ENCODE measurements at regions of chr3 and their contacts with region 1.

Region 1: DNA sequence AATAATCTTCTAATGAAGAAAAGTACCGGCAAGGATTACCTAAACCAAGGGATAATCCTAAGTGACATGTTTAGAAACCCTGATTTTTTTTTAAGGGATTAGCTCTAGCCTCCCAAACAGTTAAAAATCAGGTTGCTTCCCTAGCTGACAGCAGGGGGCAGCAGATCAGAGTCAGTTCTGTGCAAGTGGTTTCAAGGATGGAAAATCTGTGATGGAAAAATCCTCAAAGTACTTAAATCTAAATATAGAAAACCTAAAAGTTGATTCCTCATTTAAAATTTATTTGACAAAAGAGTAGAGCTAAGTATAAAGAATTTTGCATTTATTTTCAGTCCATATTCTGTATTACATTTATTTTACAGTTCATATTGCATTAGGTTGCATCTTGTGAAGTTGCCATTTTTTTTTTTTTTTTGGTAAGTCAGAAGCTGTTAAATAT is 107.6 kb downstream of the PEX5L start:
- DNase-seq: peak; percentile 66
- ATAC-seq: no peak
- H3K4me3 Mint-ChIP-seq: no peak overlapping the region
- H3K27ac Mint-ChIP-seq: no peak overlapping the region
- H3K4me1 Mint-ChIP-seq: no peaks in the 10 kb centered on the region
- H3K27me3 Mint-ChIP-seq: no peaks in the 10 kb centered on the region
- CTCF ChIP-seq: peak; percentile 74

Region 2: GRCh38 chr3:179695672-179696313 is 233.3 kb before region 1 on chr3:
- CTCF ChIA-PET with region 1: no interaction called
- POLR2A ChIA-PET with region 1: no interaction called
- intact Hi-C with region 1: no loop called
- DNase-seq: no peak
- ATAC-seq: no peak
- H3K4me3 Mint-ChIP-seq: no peak overlapping the region
- H3K27ac Mint-ChIP-seq: no peak overlapping the region
- H3K4me1 Mint-ChIP-seq: peaks cover 2% of the 10 kb centered on the region
- H3K27me3 Mint-ChIP-seq: no peaks in the 10 kb centered on the region
- CTCF ChIP-seq: no peak

Region 3: DNA sequence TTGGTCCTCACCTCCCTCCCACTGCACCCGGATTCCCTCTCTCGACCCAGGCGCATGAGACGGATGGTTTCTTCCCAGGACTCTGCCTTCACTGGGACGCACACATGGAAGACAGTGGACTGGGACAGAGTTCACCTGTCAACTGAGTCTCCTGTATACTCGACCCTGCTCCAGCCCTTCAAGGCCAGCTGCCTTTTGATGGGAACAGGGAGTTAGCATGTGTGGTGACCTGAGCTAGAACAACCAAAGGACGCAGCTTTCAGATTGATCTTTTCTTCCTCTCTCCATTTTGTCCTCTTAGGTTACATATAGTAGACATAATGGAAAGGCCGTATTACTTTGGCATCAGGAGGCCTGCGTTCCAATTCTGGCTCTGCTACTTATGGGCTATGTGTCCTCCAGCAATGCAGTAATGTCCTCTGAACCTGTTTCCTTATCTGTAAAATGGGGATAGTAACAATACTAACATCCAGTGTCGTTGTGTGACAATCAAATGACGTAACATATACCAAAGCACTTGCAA is 13.5 kb after region 1 on chr3:
- CTCF ChIA-PET with region 1: interaction called, 12 read pairs
- POLR2A ChIA-PET with region 1: no interaction called
- intact Hi-C with region 1: no loop called
- DNase-seq: no peak
- ATAC-seq: no peak
- H3K4me3 Mint-ChIP-seq: no peak overlapping the region
- H3K27ac Mint-ChIP-seq: no peak overlapping the region
- H3K4me1 Mint-ChIP-seq: peaks cover 4% of the 10 kb centered on the region
- H3K27me3 Mint-ChIP-seq: peaks cover 18% of the 10 kb centered on the region
- CTCF ChIP-seq: no peak

Region 4: DNA sequence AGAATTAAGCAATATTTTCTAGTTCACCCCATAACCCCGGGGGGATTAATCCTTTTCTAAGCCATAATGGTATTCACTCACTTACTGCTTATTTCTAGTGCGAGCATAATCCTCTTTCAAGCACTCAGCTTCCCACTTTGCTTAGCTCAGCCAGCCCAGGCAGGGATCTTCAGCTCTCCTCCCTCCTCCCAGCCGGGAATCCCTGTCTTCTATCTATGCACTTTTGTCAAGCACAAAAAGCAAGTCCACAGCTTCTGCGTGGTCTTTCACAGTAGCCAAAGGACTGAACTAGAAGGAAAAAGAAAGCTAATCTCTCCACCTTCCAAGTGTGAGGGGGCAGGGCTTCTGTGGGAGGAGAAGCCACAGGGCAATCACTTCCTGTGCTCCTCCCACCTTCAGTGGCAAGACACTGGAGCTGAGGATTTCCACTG is 44.8 kb after region 1 on chr3:
- CTCF ChIA-PET with region 1: interaction called, 10 read pairs
- POLR2A ChIA-PET with region 1: no interaction called
- intact Hi-C with region 1: no loop called
- DNase-seq: no peak
- ATAC-seq: no peak
- H3K4me3 Mint-ChIP-seq: no peak overlapping the region
- H3K27ac Mint-ChIP-seq: no peak overlapping the region
- H3K4me1 Mint-ChIP-seq: no peaks in the 10 kb centered on the region
- H3K27me3 Mint-ChIP-seq: peaks cover 2% of the 10 kb centered on the region
- CTCF ChIP-seq: no peak

Region 5: GRCh38 chr3:180594631-180595558 is 665.8 kb after region 1 on chr3:
- CTCF ChIA-PET with region 1: interaction called, 4 read pairs
- POLR2A ChIA-PET with region 1: no interaction called
- intact Hi-C with region 1: loop called (anchors 10 kb)
- DNase-seq: no peak
- ATAC-seq: no peak
- H3K4me3 Mint-ChIP-seq: no peak overlapping the region
- H3K27ac Mint-ChIP-seq: no peak overlapping the region
- H3K4me1 Mint-ChIP-seq: no peaks in the 10 kb centered on the region
- H3K27me3 Mint-ChIP-seq: peaks cover 25% of the 10 kb centered on the region
- CTCF ChIP-seq: no peak